Activated B cell treated with CpG ODN at 0.5 μM for 24 hours (primary cell): ENCODE measurements at regions of chr2 and their contacts with region 1.

Region 1: DNA sequence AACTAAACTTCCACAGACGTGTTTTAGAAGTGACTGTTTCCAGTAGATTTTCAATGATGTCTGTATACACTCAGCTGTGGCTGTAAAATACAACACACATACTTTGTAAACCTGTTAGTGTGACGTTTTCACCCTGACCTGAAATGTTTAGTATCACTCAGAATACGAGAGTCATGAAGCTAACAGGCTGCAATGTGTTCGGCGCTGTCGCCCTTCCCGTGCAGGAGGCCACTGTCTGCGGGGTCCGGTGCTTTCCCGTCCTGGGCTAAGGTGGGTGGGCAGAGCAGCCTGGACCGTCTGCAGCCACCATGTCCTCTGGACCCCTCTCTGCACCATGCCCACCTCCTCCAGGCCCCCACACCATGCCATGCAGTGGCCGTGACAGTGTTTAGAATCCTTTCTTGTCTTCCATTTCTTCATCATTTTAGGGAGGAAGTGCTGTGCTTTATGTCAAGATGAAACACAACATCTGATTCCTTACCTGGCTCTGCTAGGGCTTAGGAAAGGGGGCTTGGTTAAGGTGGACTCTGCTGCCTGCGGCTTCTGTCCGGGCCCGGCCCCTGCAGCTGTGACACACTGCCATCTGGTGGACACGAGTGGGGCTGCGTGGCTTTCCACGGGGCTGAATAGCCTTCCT is 53.8 kb upstream of the RBM44 start:
- DNase-seq: peak; percentile 76
- ATAC-seq: peak; percentile 92
- H3K4me3 Mint-ChIP-seq: no peak overlapping the region
- H3K27ac Mint-ChIP-seq: peak overlapping the region; percentile 12
- H3K4me1 Mint-ChIP-seq: peaks cover 36% of the 10 kb centered on the region
- H3K27me3 Mint-ChIP-seq: no peaks in the 10 kb centered on the region
- CTCF ChIP-seq: peak; percentile 98

Region 2: DNA sequence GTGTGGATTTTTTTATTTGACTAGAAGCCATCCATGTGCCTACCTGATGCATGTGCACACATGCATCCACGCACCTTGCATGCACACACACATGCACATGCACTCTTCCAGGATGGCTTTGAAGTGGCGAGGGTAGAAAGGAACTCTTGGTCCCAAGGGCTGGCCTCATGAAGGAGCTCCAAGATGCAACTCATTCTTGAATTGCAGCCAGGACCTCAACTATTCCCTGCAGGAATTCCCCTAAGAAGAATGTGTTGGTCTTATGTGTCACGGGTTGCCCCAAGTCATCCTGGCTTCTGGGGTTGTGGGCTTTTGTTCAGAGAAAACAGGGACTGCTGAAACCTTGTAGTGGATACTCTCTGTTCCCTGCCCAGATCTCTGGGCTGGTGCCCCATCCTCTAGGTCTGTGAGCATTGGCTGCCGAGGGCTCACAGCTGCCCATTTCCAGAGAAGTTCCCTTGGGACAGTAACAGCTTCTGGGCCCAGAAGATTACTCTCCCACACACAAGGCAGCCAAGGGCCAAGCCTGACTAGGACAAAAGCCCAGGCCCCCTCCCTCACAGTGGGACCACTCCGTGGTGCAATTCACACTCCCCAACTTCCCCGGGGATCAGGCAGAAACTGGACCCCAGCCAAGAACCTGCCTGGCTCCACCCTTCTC is 521.4 kb before region 1 on chr2:
- CTCF ChIA-PET with region 1: no interaction called
- POLR2A ChIA-PET with region 1: no interaction called
- intact Hi-C with region 1: no loop called
- DNase-seq: no peak
- ATAC-seq: no peak
- H3K4me3 Mint-ChIP-seq: no peak overlapping the region
- H3K27ac Mint-ChIP-seq: no peak overlapping the region
- H3K4me1 Mint-ChIP-seq: no peaks in the 10 kb centered on the region
- H3K27me3 Mint-ChIP-seq: peaks cover 5% of the 10 kb centered on the region
- CTCF ChIP-seq: no peak

Region 3: DNA sequence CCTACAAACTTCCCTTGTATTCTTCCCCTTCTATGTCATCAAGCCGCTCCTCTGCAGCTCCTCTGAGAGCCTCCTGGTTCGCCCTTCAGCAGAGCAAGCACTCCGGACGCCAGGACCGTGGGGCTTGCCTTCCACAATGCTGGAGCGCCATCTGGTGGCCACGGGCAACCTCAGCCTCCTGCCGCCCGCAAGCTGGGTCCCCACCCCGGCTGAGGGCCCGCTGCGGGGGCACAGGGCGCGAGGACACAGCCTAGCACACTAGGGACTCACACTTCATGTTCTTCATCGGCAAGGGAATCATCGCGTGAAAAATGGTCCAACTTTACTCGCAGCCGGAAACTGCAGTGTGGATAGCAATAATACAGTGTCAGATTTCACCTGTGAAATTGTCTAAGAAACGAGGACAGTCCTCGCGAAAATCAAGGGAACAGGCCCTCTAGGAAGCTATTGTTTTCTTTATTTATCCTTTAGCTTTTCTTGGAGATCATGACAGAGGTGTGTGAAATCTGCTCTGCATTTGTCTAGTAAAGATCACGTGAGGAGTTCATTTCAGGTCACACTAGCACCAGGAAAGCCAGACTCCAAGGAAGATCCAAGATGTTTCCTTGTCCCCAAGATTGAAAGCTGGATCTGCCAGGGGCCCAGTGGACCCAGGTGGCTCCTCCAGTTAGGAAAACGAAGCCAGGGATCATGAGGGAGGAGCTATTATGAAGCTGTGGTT is 172.6 kb before region 1 on chr2:
- CTCF ChIA-PET with region 1: interaction called, 20 read pairs
- POLR2A ChIA-PET with region 1: interaction called, 3 read pairs
- intact Hi-C with region 1: loop called (anchors 2 kb)
- DNase-seq: peak; percentile 78
- ATAC-seq: peak; percentile 96
- H3K4me3 Mint-ChIP-seq: no peak overlapping the region
- H3K27ac Mint-ChIP-seq: no peak overlapping the region
- H3K4me1 Mint-ChIP-seq: no peaks in the 10 kb centered on the region
- H3K27me3 Mint-ChIP-seq: peaks cover 15% of the 10 kb centered on the region
- CTCF ChIP-seq: peak; percentile 29

Region 4: DNA sequence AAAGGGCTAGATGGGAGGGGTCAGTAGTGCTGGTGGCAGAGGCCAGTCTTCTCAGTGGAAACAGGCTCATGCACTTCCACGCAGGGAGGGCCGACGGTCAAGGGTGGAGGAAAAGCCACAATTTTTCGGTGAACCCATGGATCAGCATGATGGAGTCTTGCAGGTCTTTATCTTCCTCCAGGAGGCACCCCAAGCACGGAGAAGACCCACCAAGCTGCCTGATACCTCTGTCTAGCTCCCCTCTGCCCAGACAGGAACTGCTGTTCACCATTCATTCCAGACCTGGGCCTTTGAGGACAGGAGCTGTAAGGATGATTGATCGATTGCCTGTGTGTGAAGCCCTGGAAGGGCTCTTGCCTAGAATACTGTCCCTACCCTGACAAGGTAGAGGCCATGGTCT is 120.2 kb before region 1 on chr2:
- CTCF ChIA-PET with region 1: interaction called, 17 read pairs
- POLR2A ChIA-PET with region 1: no interaction called
- intact Hi-C with region 1: loop called (anchors 1 kb)
- DNase-seq: no peak
- ATAC-seq: no peak
- H3K4me3 Mint-ChIP-seq: no peak overlapping the region
- H3K27ac Mint-ChIP-seq: no peak overlapping the region
- H3K4me1 Mint-ChIP-seq: peaks cover 15% of the 10 kb centered on the region
- H3K27me3 Mint-ChIP-seq: peaks cover 10% of the 10 kb centered on the region
- CTCF ChIP-seq: no peak

Region 5: GRCh38 chr2:237691908-237692600 is 52.7 kb before region 1 on chr2:
- CTCF ChIA-PET with region 1: interaction called, 17 read pairs
- POLR2A ChIA-PET with region 1: interaction called, 6 read pairs
- intact Hi-C with region 1: loop called (anchors 1 kb)
- DNase-seq: peak; percentile 91
- ATAC-seq: peak; percentile 69
- H3K4me3 Mint-ChIP-seq: peak overlapping the region; percentile 84
- H3K27ac Mint-ChIP-seq: peak overlapping the region; percentile 91
- H3K4me1 Mint-ChIP-seq: peaks cover 80% of the 10 kb centered on the region
- H3K27me3 Mint-ChIP-seq: no peaks in the 10 kb centered on the region
- CTCF ChIP-seq: no peak

Region 6: DNA sequence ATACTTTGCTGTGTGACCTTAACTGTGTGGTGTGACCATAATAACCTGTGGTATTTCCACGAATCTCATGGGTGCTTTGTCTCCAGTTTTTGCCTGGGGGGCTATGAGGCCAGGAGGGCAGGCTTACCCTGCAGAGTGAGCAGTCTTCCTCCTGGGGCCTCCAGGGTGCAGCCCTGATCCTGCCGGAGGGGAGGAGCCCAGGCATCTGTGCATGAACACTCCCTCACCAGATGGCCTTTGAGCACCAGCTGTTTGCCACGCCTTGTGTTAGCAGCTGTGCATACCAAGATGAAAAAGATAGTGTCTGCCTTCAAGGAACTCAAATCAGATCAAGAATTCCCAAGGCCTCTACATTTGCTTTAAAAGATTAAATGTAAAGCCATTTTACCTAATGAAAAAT is 21.1 kb before region 1 on chr2:
- CTCF ChIA-PET with region 1: interaction called, 14 read pairs
- POLR2A ChIA-PET with region 1: no interaction called
- intact Hi-C with region 1: no loop called
- DNase-seq: no peak
- ATAC-seq: peak; percentile 45
- H3K4me3 Mint-ChIP-seq: no peak overlapping the region
- H3K27ac Mint-ChIP-seq: no peak overlapping the region
- H3K4me1 Mint-ChIP-seq: peaks cover 44% of the 10 kb centered on the region
- H3K27me3 Mint-ChIP-seq: no peaks in the 10 kb centered on the region
- CTCF ChIP-seq: no peak